Activated CD4-positive, alpha-beta memory T cell treated with anti-CD3 and anti-CD28 coated beads for 36 hours (primary cell): ENCODE measurements at regions of chr6 and their contacts with region 1.

Region 1: GRCh38 chr6:144343701-144344428 is 58.7 kb downstream of the UTRN start:
- DNase-seq: peak; percentile 53
- H3K4me3 Mint-ChIP-seq: peak overlapping the region; percentile 95
- H3K27ac Mint-ChIP-seq: peak overlapping the region; percentile 99
- H3K4me1 Mint-ChIP-seq: peaks cover 67% of the 10 kb centered on the region
- H3K27me3 Mint-ChIP-seq: no peaks in the 10 kb centered on the region

Region 2: GRCh38 chr6:144095331-144096002 is 248.4 kb before region 1 on chr6 and contains the start of gene SF3B5:
- CTCF ChIA-PET with region 1: no interaction called
- POLR2A ChIA-PET with region 1: no interaction called
- intact Hi-C with region 1: loop called (anchors 2 kb)
- DNase-seq: peak; percentile 99
- H3K4me3 Mint-ChIP-seq: peak within 1 kb of the TSS; percentile 93
- H3K27ac Mint-ChIP-seq: peak within 1 kb of the TSS; percentile 96
- H3K4me1 Mint-ChIP-seq: peaks cover 25% of the 10 kb centered on the region
- H3K27me3 Mint-ChIP-seq: no peaks in the 10 kb centered on the region
- total RNA-seq, gene SF3B5: 162 to 171 TPM

Region 3: GRCh38 chr6:144215932-144216667 is 127.8 kb before region 1 on chr6:
- CTCF ChIA-PET with region 1: no interaction called
- POLR2A ChIA-PET with region 1: no interaction called
- intact Hi-C with region 1: loop called (anchors 2 kb)
- DNase-seq: peak; percentile 95
- H3K4me3 Mint-ChIP-seq: peak overlapping the region; percentile 85
- H3K27ac Mint-ChIP-seq: peak overlapping the region; percentile 93
- H3K4me1 Mint-ChIP-seq: peaks cover 37% of the 10 kb centered on the region
- H3K27me3 Mint-ChIP-seq: peaks cover 4% of the 10 kb centered on the region

Region 4: GRCh38 chr6:144395014-144395413 is 51.1 kb after region 1 on chr6:
- CTCF ChIA-PET with region 1: no interaction called
- POLR2A ChIA-PET with region 1: no interaction called
- intact Hi-C with region 1: no loop called
- DNase-seq: no peak
- H3K4me3 Mint-ChIP-seq: no peak overlapping the region
- H3K27ac Mint-ChIP-seq: no peak overlapping the region
- H3K4me1 Mint-ChIP-seq: peaks cover 39% of the 10 kb centered on the region
- H3K27me3 Mint-ChIP-seq: no peaks in the 10 kb centered on the region

Region 5: DNA sequence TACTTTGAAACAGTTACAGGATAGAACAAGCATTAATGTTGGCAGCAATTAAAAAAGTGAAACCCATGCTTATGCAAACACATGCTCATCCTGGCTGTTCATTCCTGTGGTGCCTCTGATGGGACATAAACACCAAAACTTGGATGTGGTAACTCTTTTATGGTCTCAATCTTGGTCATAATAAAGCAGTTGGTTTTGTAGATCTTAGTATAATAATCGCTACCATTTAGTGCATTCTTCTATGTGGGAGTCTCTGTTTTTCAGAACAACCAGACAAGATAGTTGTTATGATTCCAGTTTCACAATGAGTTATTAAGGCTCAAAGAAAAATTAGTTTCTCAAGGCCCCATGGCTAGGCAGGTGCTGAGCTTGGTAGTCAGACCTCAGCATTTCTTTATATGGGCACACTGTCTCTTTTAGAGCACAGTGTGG is 125.3 kb after region 1 on chr6:
- CTCF ChIA-PET with region 1: no interaction called
- POLR2A ChIA-PET with region 1: interaction called, 3 read pairs
- intact Hi-C with region 1: loop called (anchors 1 kb)
- DNase-seq: peak; percentile 46
- H3K4me3 Mint-ChIP-seq: peak overlapping the region; percentile 59
- H3K27ac Mint-ChIP-seq: peak overlapping the region; percentile 49
- H3K4me1 Mint-ChIP-seq: peaks cover 31% of the 10 kb centered on the region
- H3K27me3 Mint-ChIP-seq: no peaks in the 10 kb centered on the region

Region 6: GRCh38 chr6:144582939-144583613 is 239.2 kb after region 1 on chr6:
- CTCF ChIA-PET with region 1: no interaction called
- POLR2A ChIA-PET with region 1: no interaction called
- intact Hi-C with region 1: loop called (anchors 5 kb)
- DNase-seq: peak; percentile 51
- H3K4me3 Mint-ChIP-seq: peak overlapping the region; percentile 70
- H3K27ac Mint-ChIP-seq: peak overlapping the region; percentile 74
- H3K4me1 Mint-ChIP-seq: peaks cover 36% of the 10 kb centered on the region
- H3K27me3 Mint-ChIP-seq: no peaks in the 10 kb centered on the region